Head of caudate nucleus (tissue), 42 donors: ENCODE measurements at regions of chr15 and their contacts with region 1.

Region 1: DNA sequence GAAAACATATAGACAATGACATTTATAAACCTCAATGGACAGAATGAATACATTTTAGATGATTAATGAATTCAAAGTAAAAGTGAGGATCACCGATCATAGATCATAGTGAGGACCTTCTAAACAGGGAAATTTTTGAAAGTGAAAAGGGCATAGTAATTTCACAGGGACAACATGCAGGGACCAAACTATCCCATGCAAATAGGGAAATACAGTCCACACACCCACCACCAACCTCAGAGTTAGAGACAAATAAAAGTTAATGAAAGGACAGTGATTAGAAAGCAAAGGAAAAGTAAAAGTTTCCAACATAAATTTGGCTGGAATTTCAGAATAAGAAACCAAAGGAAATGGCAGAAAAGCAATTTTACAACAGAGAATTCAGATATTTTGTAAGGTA is 15.4 kb upstream of the CHRNA7 start:
- DNase-seq: no peak

Region 2: GRCh38 chr15:30670056-30670455 is 1344.9 kb before region 1 on chr15:
- intact Hi-C with region 1: no loop called
- DNase-seq: no peak

Region 3: DNA sequence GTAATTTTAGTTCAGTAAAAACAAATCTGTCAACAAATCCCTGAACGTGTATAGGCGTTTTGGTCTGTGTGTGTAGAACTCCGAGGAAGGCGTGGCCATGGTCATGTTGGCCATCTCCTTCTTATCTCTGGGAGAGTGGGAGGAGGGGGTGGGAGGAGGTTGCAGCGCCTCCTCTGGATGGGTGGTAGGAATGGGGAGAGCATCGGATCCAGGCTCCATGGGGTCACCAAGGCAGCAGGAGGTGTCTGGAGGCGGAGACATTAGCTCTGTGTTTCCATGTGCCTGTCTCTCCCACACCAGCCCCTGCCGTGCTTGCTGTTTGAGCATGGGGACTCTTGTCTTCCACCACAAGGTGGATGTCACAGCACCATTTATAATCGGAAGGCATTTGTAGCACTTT is 878.9 kb before region 1 on chr15:
- intact Hi-C with region 1: no loop called
- DNase-seq: no peak

Region 4: GRCh38 chr15:31953478-31953877 is 61.5 kb before region 1 on chr15:
- intact Hi-C with region 1: loop called (anchors 10 kb)
- DNase-seq: no peak